CD4-positive, alpha-beta T cell (primary cell): ENCODE measurements at regions of chr6 and their contacts with region 1.

Region 1: GRCh38 chr6:116268589-116269293 is 11.0 kb downstream of the TSPYL1 start:
- DNase-seq: peak in 3 of 14 experiments; percentile 67 to 81 (median 76)
- ATAC-seq: peak; percentile 95
- H3K4me3 ChIP-seq: no peak overlapping the region
- H3K4me3 Mint-ChIP-seq: no peak overlapping the region
- H3K27ac ChIP-seq: peak overlapping the region in 1 of 2 donors; percentile 10
- H3K27ac Mint-ChIP-seq: peak overlapping the region; percentile 4
- H3K4me1 ChIP-seq: peaks cover 9% of the 10 kb centered on the region
- H3K4me1 Mint-ChIP-seq: peaks cover 38% of the 10 kb centered on the region
- H3K27me3 ChIP-seq: no peaks in the 10 kb centered on the region
- H3K27me3 Mint-ChIP-seq: no peaks in the 10 kb centered on the region
- CTCF ChIP-seq: peak; percentile 94

Region 2: DNA sequence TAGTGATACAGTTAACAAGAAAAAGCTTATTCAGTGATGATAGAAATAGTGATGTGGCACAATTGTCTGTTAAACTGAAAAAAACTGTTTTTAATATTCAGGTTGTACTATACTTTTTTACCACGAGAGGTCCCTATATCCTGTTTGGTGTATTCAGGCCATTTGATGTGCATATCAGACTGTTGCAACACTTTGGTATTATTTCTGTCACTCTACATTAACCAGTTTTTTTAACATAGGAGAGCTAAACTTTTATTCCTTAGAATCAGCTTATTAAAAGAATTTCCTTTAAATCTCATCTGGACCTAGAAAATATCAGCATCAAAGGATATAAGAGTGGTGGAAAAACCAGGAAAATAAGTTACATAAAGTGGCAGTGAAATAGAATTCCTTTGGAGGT is 51.7 kb before region 1 on chr6:
- CTCF ChIA-PET with region 1: interaction called, 3 read pairs
- POLR2A ChIA-PET with region 1: no interaction called
- intact Hi-C with region 1: loop called in 1 of 2 experiments (anchors 5 kb)
- DNase-seq: peak in 3 of 14 experiments; percentile 50 to 61 (median 59)
- ATAC-seq: peak; percentile 95
- H3K4me3 ChIP-seq: no peak overlapping the region
- H3K4me3 Mint-ChIP-seq: no peak overlapping the region
- H3K27ac ChIP-seq: no peak overlapping the region
- H3K27ac Mint-ChIP-seq: no peak overlapping the region
- H3K4me1 ChIP-seq: no peaks in the 10 kb centered on the region
- H3K4me1 Mint-ChIP-seq: peaks cover 7% of the 10 kb centered on the region
- H3K27me3 ChIP-seq: no peaks in the 10 kb centered on the region
- H3K27me3 Mint-ChIP-seq: no peaks in the 10 kb centered on the region
- CTCF ChIP-seq: peak; percentile 64

Region 3: GRCh38 chr6:116253505-116254296 is 15.0 kb before region 1 on chr6 and contains the start of gene TSPYL4:
- CTCF ChIA-PET with region 1: interaction called, 28 read pairs
- POLR2A ChIA-PET with region 1: interaction called, 12 read pairs
- intact Hi-C with region 1: loop called in 1 of 2 experiments (anchors 2 kb)
- DNase-seq: peak; percentile 80 to 98 (median 88)
- ATAC-seq: peak; percentile 96
- H3K4me3 ChIP-seq: peak within 1 kb of the TSS; percentile 91
- H3K4me3 Mint-ChIP-seq: no peak within 1 kb of the TSS
- H3K27ac ChIP-seq: peak within 1 kb of the TSS; percentile 92 to 94
- H3K27ac Mint-ChIP-seq: no peak within 1 kb of the TSS
- H3K4me1 ChIP-seq: peaks cover 31% of the 10 kb centered on the region
- H3K4me1 Mint-ChIP-seq: peaks cover 6% of the 10 kb centered on the region
- H3K27me3 ChIP-seq: no peaks in the 10 kb centered on the region
- H3K27me3 Mint-ChIP-seq: no peaks in the 10 kb centered on the region
- CTCF ChIP-seq: no peak
- total RNA-seq, gene TSPYL4: 35.9 to 37.7 TPM

Region 4: DNA sequence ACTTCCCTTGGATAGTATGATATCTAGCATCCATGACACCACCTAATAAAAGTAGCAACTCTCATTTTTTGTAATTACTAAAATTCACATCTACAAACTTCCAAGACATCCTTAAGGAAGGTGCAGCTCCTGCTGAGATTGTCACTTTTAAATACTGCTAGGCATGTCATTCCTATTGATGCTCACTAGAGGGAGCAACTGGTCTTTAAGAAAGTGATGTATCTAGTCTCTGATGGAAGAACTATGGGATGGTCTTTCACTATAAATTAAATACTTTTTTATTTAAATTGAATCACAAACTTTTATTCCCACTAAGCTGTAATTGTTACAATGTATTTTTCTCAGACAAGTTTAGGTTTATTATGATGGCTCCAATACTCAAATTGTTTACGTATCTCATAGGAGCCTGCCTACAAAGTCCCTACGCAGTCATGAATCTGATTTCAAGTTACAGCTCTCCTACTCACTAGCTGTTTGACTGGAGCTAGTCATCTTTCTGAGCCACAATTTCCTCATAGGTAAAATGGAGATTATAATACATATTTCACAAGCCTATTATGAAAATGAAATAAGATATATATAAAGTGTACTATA is 19.0 kb after region 1 on chr6:
- CTCF ChIA-PET with region 1: interaction called, 32 read pairs
- POLR2A ChIA-PET with region 1: no interaction called
- intact Hi-C with region 1: no loop called
- DNase-seq: peak in 3 of 14 experiments; percentile 59 to 71 (median 67)
- ATAC-seq: peak; percentile 87
- H3K4me3 ChIP-seq: no peak overlapping the region
- H3K4me3 Mint-ChIP-seq: no peak overlapping the region
- H3K27ac ChIP-seq: no peak overlapping the region
- H3K27ac Mint-ChIP-seq: no peak overlapping the region
- H3K4me1 ChIP-seq: no peaks in the 10 kb centered on the region
- H3K4me1 Mint-ChIP-seq: no peaks in the 10 kb centered on the region
- H3K27me3 ChIP-seq: no peaks in the 10 kb centered on the region
- H3K27me3 Mint-ChIP-seq: no peaks in the 10 kb centered on the region
- CTCF ChIP-seq: peak; percentile 96

Region 5: DNA sequence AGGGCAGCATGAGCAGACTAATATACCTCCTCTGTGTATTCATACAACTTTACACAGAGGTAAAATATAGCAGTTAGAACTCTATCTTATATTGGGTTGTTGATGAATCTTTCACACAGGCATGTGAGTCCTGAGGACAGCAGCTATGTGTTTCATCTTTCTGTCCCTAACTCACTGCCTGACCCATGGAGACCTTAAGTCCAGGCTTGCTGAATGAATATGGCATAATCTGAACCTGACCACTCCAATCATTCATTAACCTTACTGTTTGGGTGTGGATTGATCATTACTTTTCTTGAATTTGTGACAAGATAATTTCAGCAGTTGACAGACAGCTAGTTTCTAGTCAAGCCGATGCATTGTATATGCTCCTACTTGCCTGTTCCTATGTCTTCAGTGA is 38.3 kb after region 1 on chr6:
- CTCF ChIA-PET with region 1: no interaction called
- POLR2A ChIA-PET with region 1: no interaction called
- intact Hi-C with region 1: no loop called
- DNase-seq: no peak
- ATAC-seq: no peak
- H3K4me3 ChIP-seq: no peak overlapping the region
- H3K4me3 Mint-ChIP-seq: no peak overlapping the region
- H3K27ac ChIP-seq: no peak overlapping the region
- H3K27ac Mint-ChIP-seq: no peak overlapping the region
- H3K4me1 ChIP-seq: no peaks in the 10 kb centered on the region
- H3K4me1 Mint-ChIP-seq: no peaks in the 10 kb centered on the region
- H3K27me3 ChIP-seq: no peaks in the 10 kb centered on the region
- H3K27me3 Mint-ChIP-seq: no peaks in the 10 kb centered on the region
- CTCF ChIP-seq: no peak

Region 6: GRCh38 chr6:116648156-116648555 is 379.4 kb after region 1 on chr6:
- CTCF ChIA-PET with region 1: no interaction called
- POLR2A ChIA-PET with region 1: no interaction called
- intact Hi-C with region 1: loop called in 1 of 2 experiments (anchors 2 kb)
- DNase-seq: no peak
- ATAC-seq: no peak
- H3K4me3 ChIP-seq: no peak overlapping the region
- H3K4me3 Mint-ChIP-seq: no peak overlapping the region
- H3K27ac ChIP-seq: no peak overlapping the region
- H3K27ac Mint-ChIP-seq: no peak overlapping the region
- H3K4me1 ChIP-seq: no peaks in the 10 kb centered on the region
- H3K4me1 Mint-ChIP-seq: peaks cover 10% of the 10 kb centered on the region
- H3K27me3 ChIP-seq: no peaks in the 10 kb centered on the region
- H3K27me3 Mint-ChIP-seq: no peaks in the 10 kb centered on the region
- CTCF ChIP-seq: no peak